HepG2 (cell line): ENCODE measurements at regions of chr2 and their contacts with region 1.

Region 1: GRCh38 chr2:139992078-139992477 is 1211.9 kb upstream of the NXPH2 start:
- DNase-seq: peak; percentile 56
- ATAC-seq: peak; percentile 95
- H3K4me3 ChIP-seq: no peak overlapping the region; a peak in 1 of 6 replicates
- H3K27ac ChIP-seq: no peak overlapping the region
- H3K4me1 ChIP-seq: peaks cover 7% of the 10 kb centered on the region; the same call in 1 of the 2 replicates
- H3K27me3 ChIP-seq: no peaks in the 10 kb centered on the region
- CTCF ChIP-seq: peak; percentile 59
- EP300 ChIP-seq: no peak
- POLR2A ChIP-seq: no peak
- RAD21 ChIP-seq: no peak; the same call in 1 of the 2 replicates

Region 2: DNA sequence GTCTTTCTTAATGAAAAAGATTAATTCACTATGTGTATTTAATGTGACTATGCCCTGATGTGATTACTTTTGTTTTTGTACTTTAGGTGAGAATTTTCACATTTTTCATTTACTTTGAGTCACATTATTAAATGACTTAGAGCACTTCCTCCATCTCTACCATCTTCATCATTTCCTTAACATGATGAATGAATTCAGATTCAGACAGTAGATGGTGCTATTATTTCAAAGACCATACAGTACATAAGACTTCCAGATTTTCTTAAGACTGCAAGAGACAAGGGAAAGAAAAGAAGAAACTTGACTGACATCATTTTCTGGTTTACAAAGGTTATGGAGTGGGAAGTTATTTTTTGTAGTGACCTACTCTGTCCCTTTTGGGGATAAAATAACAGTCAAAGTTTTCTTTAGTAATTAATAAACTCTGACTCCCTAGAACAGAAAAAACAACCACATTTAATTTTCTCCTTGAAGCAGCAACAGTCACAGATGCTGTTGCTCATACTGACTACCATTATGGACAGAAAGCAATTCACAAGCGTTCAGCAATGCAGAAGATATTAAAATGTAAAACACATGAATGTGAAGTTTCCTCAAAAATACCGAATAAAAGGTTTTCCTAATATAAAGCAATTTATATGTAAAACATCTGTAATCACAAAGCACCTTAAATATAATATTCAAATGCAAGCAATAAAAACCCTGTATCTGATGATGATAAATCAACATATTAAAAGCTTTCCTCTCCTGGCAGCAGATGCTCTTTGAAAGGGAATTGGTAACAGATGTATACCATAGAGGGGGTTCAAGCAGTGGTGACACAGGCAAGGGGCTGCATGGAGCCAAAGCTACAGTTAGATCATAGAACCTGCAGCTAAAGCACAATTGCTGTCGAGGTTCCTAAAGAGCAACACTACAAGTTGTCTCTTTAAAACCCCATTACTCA is 201.0 kb before region 1 on chr2:
- CTCF ChIA-PET with region 1: no interaction called
- POLR2A ChIA-PET with region 1: no interaction called
- in situ Hi-C with region 1: no loop called
- intact Hi-C with region 1: loop called (anchors 2 kb)
- DNase-seq: no peak
- ATAC-seq: peak; percentile 34; the same call in 1 of the 3 replicates
- H3K4me3 ChIP-seq: no peak overlapping the region
- H3K27ac ChIP-seq: no peak overlapping the region
- H3K4me1 ChIP-seq: no peaks in the 10 kb centered on the region
- H3K27me3 ChIP-seq: no peaks in the 10 kb centered on the region
- CTCF ChIP-seq: 0 out of 2 replicates have a peak, but pooled peaks have one; percentile 24
- EP300 ChIP-seq: no peak
- POLR2A ChIP-seq: no peak
- RAD21 ChIP-seq: no peak

Region 3: GRCh38 chr2:140041239-140041638 is 49.2 kb after region 1 on chr2:
- CTCF ChIA-PET with region 1: no interaction called
- POLR2A ChIA-PET with region 1: no interaction called
- in situ Hi-C with region 1: no loop called
- intact Hi-C with region 1: no loop called
- DNase-seq: no peak
- ATAC-seq: no peak
- H3K4me3 ChIP-seq: no peak overlapping the region
- H3K27ac ChIP-seq: no peak overlapping the region
- H3K4me1 ChIP-seq: no peaks in the 10 kb centered on the region
- H3K27me3 ChIP-seq: no peaks in the 10 kb centered on the region
- CTCF ChIP-seq: no peak
- EP300 ChIP-seq: no peak
- POLR2A ChIP-seq: no peak
- RAD21 ChIP-seq: no peak